Prostate gland (tissue), 2 donors: ENCODE measurements at regions of chr3 and their contacts with region 1.

Region 1: DNA sequence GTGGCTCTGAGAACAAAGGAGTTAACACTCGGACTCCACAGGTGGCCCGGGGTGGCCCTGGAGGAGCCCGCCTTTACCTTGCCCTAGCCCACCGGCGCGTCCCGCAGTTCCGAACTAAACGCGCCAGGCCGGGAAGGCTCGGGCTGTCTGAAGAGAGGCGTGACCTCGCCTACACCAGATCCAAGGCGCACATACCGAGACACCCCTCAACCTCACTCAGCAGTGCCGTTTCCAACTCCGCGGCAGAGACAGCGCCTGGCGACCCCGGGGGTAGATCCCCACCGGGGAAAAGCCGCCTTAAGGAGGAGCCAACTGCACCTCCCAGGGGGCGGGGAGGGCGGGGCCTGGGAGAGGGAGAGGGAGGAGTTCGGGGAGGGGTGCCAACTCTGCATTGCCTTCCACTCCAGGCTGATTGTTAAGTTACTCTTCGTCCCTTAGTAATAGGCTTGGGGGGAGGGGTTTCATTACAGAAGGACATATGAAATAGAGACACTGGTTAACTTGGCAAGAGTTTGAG is at the start of gene DLG1:
- DNase-seq: peak; percentile 93
- H3K4me3 ChIP-seq: peak within 1 kb of the TSS; percentile 76 to 97
- H3K27ac ChIP-seq: peak within 1 kb of the TSS; percentile 91 to 92
- H3K4me1 ChIP-seq: no peaks in the 10 kb centered on the region
- H3K27me3 ChIP-seq: no peaks in the 10 kb centered on the region
- CTCF ChIP-seq: no peak
- POLR2A ChIP-seq: peak; percentile 61
- total RNA-seq, gene DLG1: 59.0 to 98.2 TPM

Region 2: GRCh38 chr3:197103766-197104165 is 194.6 kb before region 1 on chr3:
- intact Hi-C with region 1: no loop called
- DNase-seq: no peak
- H3K4me3 ChIP-seq: no peak overlapping the region
- H3K27ac ChIP-seq: no peak overlapping the region
- H3K4me1 ChIP-seq: no peaks in the 10 kb centered on the region
- H3K27me3 ChIP-seq: no peaks in the 10 kb centered on the region
- CTCF ChIP-seq: no peak
- POLR2A ChIP-seq: no peak

Region 3: GRCh38 chr3:197137751-197138150 is 160.6 kb before region 1 on chr3:
- intact Hi-C with region 1: no loop called
- DNase-seq: no peak
- H3K4me3 ChIP-seq: no peak overlapping the region
- H3K27ac ChIP-seq: no peak overlapping the region
- H3K4me1 ChIP-seq: no peaks in the 10 kb centered on the region
- H3K27me3 ChIP-seq: no peaks in the 10 kb centered on the region
- CTCF ChIP-seq: no peak
- POLR2A ChIP-seq: no peak

Region 4: DNA sequence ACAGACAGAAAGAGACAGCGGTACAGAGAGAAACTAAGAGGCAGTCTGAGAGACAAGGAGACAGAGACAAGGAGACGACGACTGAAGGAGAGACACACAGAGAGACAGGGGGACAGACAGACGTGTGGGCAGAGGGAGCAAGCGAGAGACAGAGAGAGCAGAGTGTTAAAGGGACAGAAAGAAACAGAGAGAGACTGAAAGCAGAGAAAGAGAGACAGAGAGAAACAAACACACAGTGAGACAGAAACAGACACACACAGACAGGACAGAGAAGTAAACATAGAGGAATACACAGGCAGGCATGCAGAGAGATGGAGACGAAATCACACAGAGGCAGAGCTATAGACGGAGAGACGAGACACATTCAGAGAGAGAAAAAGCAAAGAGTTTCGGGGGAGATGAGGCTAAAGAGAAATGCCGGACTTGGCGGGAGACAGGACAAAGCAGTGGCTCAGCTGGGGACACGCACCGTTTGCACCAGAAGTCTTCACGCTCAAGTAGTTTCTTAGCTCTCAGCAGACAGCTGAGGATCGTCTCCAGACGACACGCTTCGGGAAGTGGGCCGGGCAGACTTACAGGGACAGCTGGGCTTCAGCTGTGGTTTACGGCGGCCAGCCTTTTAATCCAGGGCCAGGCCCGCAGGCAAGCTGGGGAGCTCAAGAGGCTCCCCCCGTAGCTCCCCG is 56.1 kb after region 1 on chr3:
- intact Hi-C with region 1: loop called (anchors 5 kb)
- DNase-seq: peak; percentile 21
- H3K4me3 ChIP-seq: no peak overlapping the region
- H3K27ac ChIP-seq: peak overlapping the region in 1 of 2 donors; percentile 9
- H3K4me1 ChIP-seq: no peaks in the 10 kb centered on the region
- H3K27me3 ChIP-seq: no peaks in the 10 kb centered on the region
- CTCF ChIP-seq: no peak
- POLR2A ChIP-seq: no peak

Region 5: GRCh38 chr3:197394464-197395321 is 96.3 kb after region 1 on chr3:
- intact Hi-C with region 1: loop called (anchors 10 kb)
- DNase-seq: peak; percentile 82
- H3K4me3 ChIP-seq: no peak overlapping the region
- H3K27ac ChIP-seq: peak overlapping the region; percentile 64
- H3K4me1 ChIP-seq: no peaks in the 10 kb centered on the region
- H3K27me3 ChIP-seq: no peaks in the 10 kb centered on the region
- CTCF ChIP-seq: no peak
- POLR2A ChIP-seq: no peak

Region 6: DNA sequence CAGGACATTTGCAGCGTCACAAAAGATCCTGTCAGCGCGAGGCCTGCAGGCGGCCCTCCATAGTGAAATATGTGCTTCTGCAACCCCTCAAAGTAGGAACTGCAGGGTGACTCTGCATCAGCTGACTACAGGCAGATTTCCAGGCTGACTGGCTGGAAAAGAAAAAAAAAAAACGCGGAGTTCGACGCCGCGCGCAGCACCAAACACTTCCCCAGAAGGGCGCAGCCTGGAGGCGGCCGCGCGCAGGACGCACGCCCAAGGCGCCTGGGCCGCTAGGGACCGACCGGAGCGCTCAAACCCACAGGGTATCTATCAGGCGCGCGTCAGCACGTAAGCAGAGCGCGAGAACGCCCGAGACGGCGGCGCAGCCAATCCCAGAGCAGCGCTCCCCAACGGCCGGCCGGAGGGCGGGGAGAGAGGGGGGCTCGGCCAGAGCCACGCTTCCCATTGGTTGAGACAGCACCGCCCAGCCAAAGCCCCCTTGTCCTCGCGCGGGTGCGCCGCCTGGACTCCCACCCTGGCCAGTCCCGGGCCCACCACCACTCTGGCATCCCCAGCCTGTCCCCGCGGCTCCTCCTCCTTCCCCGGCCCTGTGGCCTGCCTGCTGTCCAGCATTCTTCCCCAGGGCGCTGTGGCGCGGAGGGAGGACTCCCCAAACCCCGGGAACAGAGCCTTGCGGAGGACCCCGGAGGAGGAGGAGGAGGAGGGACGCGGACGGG is 256.3 kb after region 1 on chr3:
- intact Hi-C with region 1: loop called (anchors 5 kb)
- DNase-seq: peak; percentile 96
- H3K4me3 ChIP-seq: peak overlapping the region; percentile 69 to 89
- H3K27ac ChIP-seq: peak overlapping the region; percentile 97
- H3K4me1 ChIP-seq: no peaks in the 10 kb centered on the region
- H3K27me3 ChIP-seq: no peaks in the 10 kb centered on the region
- CTCF ChIP-seq: peak in 3 of 4 experiments; percentile 40 to 71 (median 61)
- POLR2A ChIP-seq: peak; percentile 73